Mammary epithelial cell (primary cell): ENCODE measurements at regions of chr2 and their contacts with region 1.

Region 1: GRCh38 chr2:219229305-219230058 is at the starts of genes ANKZF1 and ATG9A:
- DNase-seq: peak; percentile 100
- H3K4me3 ChIP-seq: peak within 1 kb of the TSS; percentile 79 to 94 (median 92)
- H3K27ac ChIP-seq: peak within 1 kb of the TSS; percentile 93
- H3K4me1 ChIP-seq: peaks cover 17% of the 10 kb centered on the region
- H3K27me3 ChIP-seq: no peaks in the 10 kb centered on the region
- CTCF ChIP-seq: no peak
- total RNA-seq, gene ANKZF1: 29.2 to 52.9 TPM
- total RNA-seq, gene ATG9A: 60.4 to 74.5 TPM

Region 2: DNA sequence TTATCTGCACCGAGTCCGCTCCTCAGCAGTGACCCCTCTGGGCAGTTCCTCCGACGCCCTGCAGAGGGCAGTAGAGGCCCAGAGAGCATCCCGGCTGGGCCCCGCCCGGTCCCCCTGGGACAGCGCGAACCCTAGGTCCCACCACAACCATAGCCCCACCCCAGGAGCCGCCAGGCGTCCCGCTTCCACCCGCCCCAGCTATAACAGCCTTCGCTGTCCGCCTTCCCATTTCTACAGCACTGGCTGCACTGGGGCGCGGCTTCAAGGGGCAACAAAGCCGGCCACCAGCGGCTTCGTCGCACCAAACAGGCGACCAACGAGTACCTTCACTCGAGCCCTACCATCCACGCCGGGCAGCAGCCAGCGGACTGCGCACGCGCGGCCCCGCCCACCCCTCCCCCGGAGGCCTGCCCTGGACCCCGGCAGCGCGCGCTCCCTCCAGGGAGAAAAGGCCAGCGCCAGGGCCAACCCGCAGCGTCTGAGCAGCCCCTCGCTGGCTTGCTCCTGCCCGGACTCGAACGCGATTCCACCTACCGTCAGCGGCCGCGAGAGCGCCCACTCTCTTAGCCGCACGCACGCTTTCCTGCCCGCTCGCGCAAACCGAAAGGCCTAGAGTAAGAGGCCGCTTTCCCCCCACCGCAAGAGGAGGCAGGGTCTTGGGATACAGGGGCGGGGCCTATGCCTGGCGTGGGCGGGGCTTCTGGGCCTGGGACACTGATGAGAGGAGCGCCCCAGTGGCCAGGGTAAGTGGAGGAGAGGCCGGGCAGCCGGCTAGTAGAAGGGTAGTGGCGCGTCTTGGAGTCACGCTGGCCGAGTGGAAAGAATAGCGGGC is 69.1 kb before region 1 on chr2 and contains the start of gene NHEJ1:
- CTCF ChIA-PET with region 1: no interaction called
- dilution Hi-C with region 1: no loop called
- in situ Hi-C with region 1: no loop called
- intact Hi-C with region 1: loop called (anchors 1 kb)
- DNase-seq: peak; percentile 88
- H3K4me3 ChIP-seq: peak within 1 kb of the TSS; percentile 74 to 91 (median 79)
- H3K27ac ChIP-seq: peak within 1 kb of the TSS; percentile 19
- H3K4me1 ChIP-seq: peaks cover 15% of the 10 kb centered on the region
- H3K27me3 ChIP-seq: no peaks in the 10 kb centered on the region
- CTCF ChIP-seq: peak; percentile 84 to 96
- total RNA-seq, gene NHEJ1: 10.4 to 13.3 TPM

Region 3: GRCh38 chr2:219218732-219219701 is 10.5 kb before region 1 on chr2 and contains the start of gene ABCB6:
- CTCF ChIA-PET with region 1: no interaction called
- dilution Hi-C with region 1: no loop called
- in situ Hi-C with region 1: no loop called
- intact Hi-C with region 1: loop called (anchors 1 kb)
- DNase-seq: peak; percentile 57
- H3K4me3 ChIP-seq: peak within 1 kb of the TSS; percentile 12 to 54 (median 48)
- H3K27ac ChIP-seq: peak within 1 kb of the TSS; percentile 18
- H3K4me1 ChIP-seq: peaks cover 21% of the 10 kb centered on the region
- H3K27me3 ChIP-seq: no peaks in the 10 kb centered on the region
- CTCF ChIP-seq: no peak
- total RNA-seq, gene ABCB6: 9.6 to 15.7 TPM

Region 4: GRCh38 chr2:219278655-219279516 is 49.4 kb after region 1 on chr2 and contains the start of gene DNAJB2:
- CTCF ChIA-PET with region 1: no interaction called
- dilution Hi-C with region 1: no loop called
- in situ Hi-C with region 1: no loop called
- intact Hi-C with region 1: loop called (anchors 1 kb)
- DNase-seq: peak; percentile 99
- H3K4me3 ChIP-seq: peak within 1 kb of the TSS; percentile 62 to 70 (median 62)
- H3K27ac ChIP-seq: peak within 1 kb of the TSS; percentile 80
- H3K4me1 ChIP-seq: peaks cover 45% of the 10 kb centered on the region
- H3K27me3 ChIP-seq: no peaks in the 10 kb centered on the region
- CTCF ChIP-seq: no peak
- total RNA-seq, gene DNAJB2: 58.9 to 110 TPM